WTC11 (cell line): ENCODE measurements at regions of chr3 and their contacts with region 1.

Region 1: GRCh38 chr3:15405448-15406050 is 21.8 kb downstream of the METTL6 start:
- DNase-seq: no peak
- ATAC-seq: peak; percentile 69
- H3K4me3 Mint-ChIP-seq: no peak overlapping the region
- H3K27ac Mint-ChIP-seq: no peak overlapping the region
- H3K4me1 Mint-ChIP-seq: no peaks in the 10 kb centered on the region
- H3K27me3 Mint-ChIP-seq: no peaks in the 10 kb centered on the region
- CTCF ChIP-seq: no peak

Region 2: GRCh38 chr3:15108082-15108545 is 297.4 kb before region 1 on chr3:
- CTCF ChIA-PET with region 1: interaction called, 21 read pairs
- POLR2A ChIA-PET with region 1: no interaction called
- DNase-seq: peak; percentile 85
- ATAC-seq: peak; percentile 92
- H3K4me3 Mint-ChIP-seq: no peak overlapping the region
- H3K27ac Mint-ChIP-seq: no peak overlapping the region
- H3K4me1 Mint-ChIP-seq: peaks cover 9% of the 10 kb centered on the region
- H3K27me3 Mint-ChIP-seq: no peaks in the 10 kb centered on the region
- CTCF ChIP-seq: peak; percentile 97

Region 3: GRCh38 chr3:15205934-15206661 is 199.5 kb before region 1 on chr3 and contains the start of gene CAPN7:
- CTCF ChIA-PET with region 1: interaction called, 35 read pairs
- POLR2A ChIA-PET with region 1: no interaction called
- DNase-seq: peak; percentile 80
- ATAC-seq: peak; percentile 81
- H3K4me3 Mint-ChIP-seq: peak within 1 kb of the TSS; percentile 82
- H3K27ac Mint-ChIP-seq: peak within 1 kb of the TSS; percentile 47
- H3K4me1 Mint-ChIP-seq: peaks cover 11% of the 10 kb centered on the region
- H3K27me3 Mint-ChIP-seq: no peaks in the 10 kb centered on the region
- CTCF ChIP-seq: no peak
- total RNA-seq, gene CAPN7: 16.8 to 20.3 TPM (median 17.9 TPM) in 3 replicates

Region 4: GRCh38 chr3:15276028-15276724 is 129.4 kb before region 1 on chr3:
- CTCF ChIA-PET with region 1: interaction called, 12 read pairs
- POLR2A ChIA-PET with region 1: no interaction called
- DNase-seq: no peak
- ATAC-seq: no peak
- H3K4me3 Mint-ChIP-seq: no peak overlapping the region
- H3K27ac Mint-ChIP-seq: no peak overlapping the region
- H3K4me1 Mint-ChIP-seq: peaks cover 12% of the 10 kb centered on the region
- H3K27me3 Mint-ChIP-seq: no peaks in the 10 kb centered on the region
- CTCF ChIP-seq: no peak

Region 5: DNA sequence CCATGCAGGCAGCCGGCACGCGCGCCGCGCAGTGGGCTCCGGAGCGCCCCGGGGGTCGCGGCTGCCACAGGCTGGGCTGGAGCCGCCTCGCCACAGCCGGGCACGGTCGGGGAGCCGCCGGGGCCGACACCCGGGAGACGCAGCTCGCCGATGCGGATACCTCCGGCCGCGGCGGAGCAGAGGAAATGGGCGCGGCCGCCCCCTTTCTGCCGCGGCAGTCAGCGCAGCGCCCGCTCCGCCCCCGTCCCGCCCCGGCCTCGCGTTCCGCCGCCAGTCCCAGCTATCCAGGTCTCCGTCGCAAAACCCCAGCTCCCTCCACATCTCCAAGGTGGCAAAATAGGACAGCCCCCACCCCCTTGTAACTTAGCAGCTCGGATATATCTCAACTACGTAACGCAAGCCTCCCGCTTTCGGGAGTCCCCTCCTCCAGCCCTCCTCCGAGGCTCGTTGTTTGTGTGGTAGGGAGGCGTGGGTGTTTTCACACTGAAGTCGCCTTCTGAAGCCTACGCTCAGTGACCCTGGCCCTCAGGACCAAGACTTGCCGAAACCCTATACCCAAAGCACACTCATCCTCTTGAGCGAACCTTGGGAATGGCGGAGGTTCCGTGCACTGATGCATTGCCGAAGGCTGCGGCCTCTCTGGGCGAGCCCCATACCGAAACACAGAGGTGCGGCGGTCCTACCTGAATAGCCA is 73.0 kb before region 1 on chr3 and contains the start of gene SH3BP5:
- CTCF ChIA-PET with region 1: interaction called, 16 read pairs
- POLR2A ChIA-PET with region 1: no interaction called
- DNase-seq: peak; percentile 79
- ATAC-seq: peak; percentile 92
- H3K4me3 Mint-ChIP-seq: peak within 1 kb of the TSS; percentile 95
- H3K27ac Mint-ChIP-seq: peak within 1 kb of the TSS; percentile 87
- H3K4me1 Mint-ChIP-seq: peaks cover 33% of the 10 kb centered on the region
- H3K27me3 Mint-ChIP-seq: peaks cover 34% of the 10 kb centered on the region
- CTCF ChIP-seq: peak; percentile 51; the same call in 1 of the 2 replicates
- total RNA-seq, gene SH3BP5: 5.1 to 7.2 TPM (median 5.9 TPM) in 3 replicates

Region 6: GRCh38 chr3:15377961-15378791 is 27.4 kb before region 1 on chr3:
- CTCF ChIA-PET with region 1: interaction called, 12 read pairs
- POLR2A ChIA-PET with region 1: no interaction called
- DNase-seq: peak; percentile 93
- ATAC-seq: peak; percentile 98
- H3K4me3 Mint-ChIP-seq: peak overlapping the region; percentile 47
- H3K27ac Mint-ChIP-seq: peak overlapping the region; percentile 57; the same call in 1 of the 2 replicates
- H3K4me1 Mint-ChIP-seq: peaks cover 5% of the 10 kb centered on the region; the same call in 1 of the 2 replicates
- H3K27me3 Mint-ChIP-seq: peaks cover 2% of the 10 kb centered on the region; the same call in 1 of the 2 replicates
- CTCF ChIP-seq: peak; percentile 68